ENCODE measurements at regions of chr16 and their contacts with region 1.

Region 1: DNA sequence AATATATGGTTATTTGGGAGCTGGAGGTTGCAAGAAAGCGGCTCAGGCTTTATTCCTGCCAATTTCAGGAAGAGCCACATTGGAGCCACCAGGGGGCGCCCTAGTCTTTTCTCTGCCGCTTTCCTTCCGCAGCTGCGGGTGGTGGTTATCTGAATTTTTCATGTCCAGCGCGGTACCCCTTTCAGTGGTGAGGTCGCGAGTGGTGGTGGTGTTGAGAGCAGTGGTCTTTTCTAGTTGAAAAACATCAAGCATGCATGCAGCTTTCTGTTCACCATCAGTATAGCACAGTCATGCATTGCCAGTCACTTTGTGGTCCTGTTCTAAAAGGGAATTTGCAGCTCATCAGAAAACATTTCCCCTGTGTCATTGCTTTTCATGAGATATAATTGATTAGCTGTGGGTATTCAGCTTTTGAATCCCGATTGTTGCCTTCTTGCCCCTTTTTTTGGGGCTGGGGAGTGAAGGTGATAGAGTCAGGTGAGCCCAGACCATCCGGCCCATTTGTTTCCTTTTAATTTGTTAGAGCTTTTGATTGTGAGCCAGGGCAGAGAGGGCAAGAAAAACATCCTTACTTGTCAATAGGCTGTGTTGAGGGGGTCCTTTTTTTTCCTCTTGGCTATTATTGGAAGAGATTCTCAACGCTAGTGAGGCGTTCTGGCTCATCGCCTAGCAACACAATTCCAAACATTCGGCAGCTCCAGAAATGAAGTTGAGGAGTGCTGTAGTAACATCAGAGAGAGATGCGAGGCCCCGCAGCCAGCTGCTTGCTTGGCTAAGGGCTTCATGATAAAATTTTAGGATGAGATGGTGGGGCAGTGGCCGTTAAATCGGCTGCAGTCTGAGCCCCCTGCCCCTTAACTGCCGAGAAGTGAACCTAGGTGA is 119.0 kb downstream of the SNX29 start:
- DNase-seq: peak; percentile 77

Region 2: GRCh38 chr16:12083631-12084030 is 11.9 kb before region 1 on chr16:
- CTCF ChIA-PET with region 1: interaction called, 14 read pairs
- POLR2A ChIA-PET with region 1: no interaction called
- DNase-seq: no peak

Region 3: DNA sequence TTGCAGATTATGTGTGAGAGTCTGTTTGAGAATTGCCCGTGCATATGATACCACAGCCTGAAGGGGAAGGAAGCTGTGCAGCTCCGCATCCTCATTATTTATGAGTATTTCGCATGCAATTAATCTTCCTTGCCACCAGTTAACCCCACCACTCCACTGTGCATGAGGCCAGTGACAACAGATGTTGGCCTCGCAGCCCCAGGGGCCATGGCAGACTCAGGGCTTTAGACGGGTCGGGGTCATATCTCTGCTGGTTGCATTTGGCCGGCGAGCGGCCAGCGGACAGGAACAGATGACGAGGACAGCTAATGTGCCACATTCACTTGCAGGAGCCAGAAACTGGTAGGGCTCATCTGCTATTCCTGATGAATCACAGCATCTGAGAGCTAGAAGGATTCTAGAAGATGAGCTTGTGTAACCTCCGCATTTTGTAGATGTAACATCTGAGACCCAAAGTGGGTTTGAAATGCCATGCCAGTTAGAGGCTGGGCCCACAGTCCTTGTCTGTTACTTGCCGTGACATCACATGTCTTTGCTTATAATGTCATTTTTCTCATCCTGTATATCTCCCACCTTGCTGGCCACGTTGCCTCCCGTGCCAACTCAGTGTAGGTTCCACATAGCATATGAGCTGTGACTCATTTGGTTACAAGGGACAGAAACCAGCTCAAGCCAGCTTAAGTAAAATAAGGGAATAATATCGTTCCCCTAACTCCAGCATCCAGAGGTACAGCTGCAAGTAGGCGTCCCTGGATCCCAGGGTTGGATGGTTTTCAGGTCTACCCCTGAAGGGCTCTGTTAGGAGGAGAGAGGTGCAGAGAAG is 18.2 kb after region 1 on chr16:
- CTCF ChIA-PET with region 1: interaction called, 12 read pairs
- POLR2A ChIA-PET with region 1: no interaction called
- DNase-seq: no peak

Region 4: DNA sequence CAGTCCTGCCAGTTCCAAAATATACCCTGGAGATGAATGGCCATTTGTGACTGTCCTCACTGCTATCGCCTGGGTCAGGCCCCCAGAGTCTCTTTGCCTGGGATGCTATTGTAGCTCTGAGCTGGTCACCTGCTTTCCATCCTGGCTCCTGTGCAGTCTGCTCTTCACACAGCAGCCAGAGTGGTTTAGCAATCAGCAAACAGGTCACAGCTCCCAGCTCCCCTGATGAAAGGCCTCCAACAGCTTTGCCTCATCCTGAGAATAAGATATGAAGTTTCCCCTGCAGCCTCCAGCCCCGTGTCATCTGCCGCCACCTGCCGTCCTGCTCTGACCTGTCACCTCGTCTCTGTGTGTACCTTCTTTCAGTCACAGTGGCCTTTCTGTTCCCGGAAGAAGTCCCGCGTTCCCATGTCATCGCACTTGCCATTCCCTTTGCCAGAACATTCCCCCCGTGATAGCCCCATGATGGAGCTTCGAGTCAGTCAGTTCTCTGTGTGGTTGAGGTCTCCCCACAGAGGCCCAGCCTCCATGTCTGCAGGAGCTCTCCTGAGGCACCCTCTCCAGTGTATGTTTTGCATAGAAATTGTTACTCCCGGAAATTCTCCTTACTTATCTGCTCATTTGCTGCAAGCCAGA is 162.5 kb after region 1 on chr16:
- CTCF ChIA-PET with region 1: interaction called, 24 read pairs
- POLR2A ChIA-PET with region 1: no interaction called
- DNase-seq: no peak

Region 5: DNA sequence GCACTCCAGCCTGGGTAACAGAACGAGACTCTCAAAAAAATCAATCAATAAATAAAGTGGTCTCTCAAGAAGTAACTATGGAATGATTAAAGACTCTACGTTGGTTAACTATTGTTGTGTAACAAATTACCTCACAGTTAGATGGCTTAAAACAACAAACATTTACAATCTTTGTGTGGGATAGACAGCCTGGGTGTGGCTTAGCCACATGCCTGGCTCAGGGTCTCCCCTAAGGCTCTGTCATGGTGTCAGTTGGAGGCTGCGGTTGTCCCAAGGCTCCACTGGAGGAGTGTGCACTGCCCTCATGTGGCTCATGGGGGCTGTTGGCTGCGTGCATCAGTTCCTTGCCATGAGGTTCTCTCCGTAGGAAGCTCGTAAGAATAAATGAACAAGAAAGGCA is 175.5 kb after region 1 on chr16:
- CTCF ChIA-PET with region 1: interaction called, 24 read pairs
- POLR2A ChIA-PET with region 1: no interaction called
- DNase-seq: peak; percentile 75

Region 6: GRCh38 chr16:12436201-12436657 is 340.7 kb after region 1 on chr16:
- CTCF ChIA-PET with region 1: no interaction called
- POLR2A ChIA-PET with region 1: no interaction called
- DNase-seq: no peak

Measured in HEK293T (cell line).